ENCODE measurements at regions of chr1 and their contacts with region 1.

Region 1: GRCh38 chr1:202009326-202010179 is 834 bp upstream of the ELF3 start:
- DNase-seq: peak; percentile 82
- CTCF ChIP-seq: peak; percentile 84

Region 2: GRCh38 chr1:202069662-202070061 is 60.1 kb after region 1 on chr1:
- in situ Hi-C with region 1: no loop called
- DNase-seq: no peak
- CTCF ChIP-seq: no peak

Region 3: GRCh38 chr1:202122639-202123335 is 113.2 kb after region 1 on chr1 and contains the start of gene GPR37L1:
- in situ Hi-C with region 1: loop called (anchors 5 kb)
- DNase-seq: no peak
- CTCF ChIP-seq: no peak